Mammary epithelial cell (primary cell): ENCODE measurements at regions of chr11 and their contacts with region 1.

Region 1: DNA sequence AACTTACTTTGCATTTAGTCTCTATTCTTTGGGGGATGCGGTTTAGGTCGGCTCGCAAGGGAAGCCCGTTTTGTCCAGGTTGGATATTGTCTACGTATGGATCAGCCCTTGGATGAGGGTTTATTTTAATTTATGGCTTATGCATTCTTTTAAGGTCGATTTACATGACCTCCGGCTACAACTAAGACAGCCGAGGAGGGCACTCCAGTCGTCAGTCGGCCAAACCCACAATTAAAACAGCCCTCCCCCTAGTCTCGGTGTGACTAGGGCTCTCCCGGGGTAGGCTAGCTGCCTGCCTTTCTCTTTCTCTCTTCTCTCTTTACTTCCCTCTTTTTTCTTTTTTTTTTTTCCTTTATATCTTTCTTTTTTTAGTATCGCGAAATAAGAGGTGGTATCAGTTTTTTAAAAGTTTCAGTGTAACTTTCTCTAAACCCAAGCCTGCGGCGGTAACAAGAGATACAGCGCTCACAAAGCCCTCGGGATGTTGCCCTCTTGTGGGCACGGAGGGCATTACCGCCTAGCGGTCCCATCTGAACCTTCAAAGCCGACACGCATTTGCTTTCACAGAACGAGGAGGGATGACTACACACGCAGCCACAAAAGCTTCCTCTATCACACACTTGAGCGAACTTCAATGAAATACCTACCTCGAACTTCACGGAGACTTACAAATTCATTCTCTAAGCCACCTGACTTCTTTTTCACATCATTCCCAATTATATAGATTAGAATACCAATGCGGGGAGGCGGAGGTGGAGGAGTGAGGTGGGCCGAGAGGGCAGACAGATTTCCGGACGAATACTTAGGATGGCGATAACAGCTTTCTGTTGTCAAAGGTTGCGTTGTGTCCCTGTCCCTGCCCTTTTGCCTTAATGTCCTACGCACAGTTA is 132.3 kb upstream of the C11orf58 start:
- DNase-seq: peak; percentile 92
- H3K4me3 ChIP-seq: peak overlapping the region; percentile 64 to 75 (median 65)
- H3K27ac ChIP-seq: no peak overlapping the region
- H3K4me1 ChIP-seq: peaks cover 33% of the 10 kb centered on the region
- H3K27me3 ChIP-seq: peaks cover 32% of the 10 kb centered on the region
- CTCF ChIP-seq: peak; percentile 90 to 93

Region 2: GRCh38 chr11:15826826-15827225 is 779.3 kb before region 1 on chr11:
- CTCF ChIA-PET with region 1: interaction called, 4 read pairs
- dilution Hi-C with region 1: no loop called
- in situ Hi-C with region 1: loop called in 1 of 2 experiments (anchors 25 kb)
- intact Hi-C with region 1: no loop called
- DNase-seq: peak; percentile 15
- H3K4me3 ChIP-seq: no peak overlapping the region
- H3K27ac ChIP-seq: no peak overlapping the region
- H3K4me1 ChIP-seq: no peaks in the 10 kb centered on the region
- H3K27me3 ChIP-seq: no peaks in the 10 kb centered on the region
- CTCF ChIP-seq: peak; percentile 52 to 64

Region 3: GRCh38 chr11:16097543-16097942 is 508.6 kb before region 1 on chr11:
- CTCF ChIA-PET with region 1: interaction called, 7 read pairs
- dilution Hi-C with region 1: no loop called
- in situ Hi-C with region 1: no loop called
- intact Hi-C with region 1: loop called (anchors 1 kb)
- DNase-seq: peak; percentile 90
- H3K4me3 ChIP-seq: peak overlapping the region in 1 of 3 experiments; percentile 16
- H3K27ac ChIP-seq: peak overlapping the region; percentile 51
- H3K4me1 ChIP-seq: peaks cover 35% of the 10 kb centered on the region
- H3K27me3 ChIP-seq: no peaks in the 10 kb centered on the region
- CTCF ChIP-seq: no peak

Region 4: DNA sequence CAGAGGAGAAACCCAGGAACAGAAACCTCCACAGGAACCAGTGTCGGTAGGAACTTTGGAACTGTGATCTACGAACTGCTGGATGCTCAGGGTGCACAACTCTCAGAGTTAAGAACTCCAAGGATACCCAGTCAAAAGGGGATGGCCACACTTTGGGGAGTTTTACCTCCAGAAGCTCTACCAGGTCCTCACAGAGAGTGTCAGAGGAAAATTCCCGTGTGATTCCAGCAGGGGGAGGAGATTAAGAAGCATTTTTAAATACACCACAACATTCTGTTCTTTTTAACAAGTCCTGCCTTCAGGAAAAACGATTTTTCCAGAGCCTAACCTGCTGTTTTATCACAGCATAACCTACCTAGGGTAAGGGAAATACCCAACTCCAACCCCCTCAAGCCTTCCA is 353.8 kb before region 1 on chr11:
- CTCF ChIA-PET with region 1: no interaction called
- dilution Hi-C with region 1: no loop called
- in situ Hi-C with region 1: no loop called
- intact Hi-C with region 1: loop called (anchors 5 kb)
- DNase-seq: no peak
- H3K4me3 ChIP-seq: no peak overlapping the region
- H3K27ac ChIP-seq: no peak overlapping the region
- H3K4me1 ChIP-seq: no peaks in the 10 kb centered on the region
- H3K27me3 ChIP-seq: no peaks in the 10 kb centered on the region
- CTCF ChIP-seq: peak; percentile 22 to 38

Region 5: GRCh38 chr11:16356057-16356760 is 249.9 kb before region 1 on chr11 and contains the start of gene SOX6:
- CTCF ChIA-PET with region 1: no interaction called
- dilution Hi-C with region 1: no loop called
- in situ Hi-C with region 1: no loop called
- intact Hi-C with region 1: loop called (anchors 5 kb)
- DNase-seq: peak; percentile 29
- H3K4me3 ChIP-seq: no peak within 1 kb of the TSS
- H3K27ac ChIP-seq: no peak within 1 kb of the TSS
- H3K4me1 ChIP-seq: no peaks in the 10 kb centered on the region
- H3K27me3 ChIP-seq: peaks cover 7% of the 10 kb centered on the region
- CTCF ChIP-seq: no peak
- total RNA-seq, gene SOX6: 2.3 to 7.9 TPM

Region 6: GRCh38 chr11:16468735-16469453 is 137.2 kb before region 1 on chr11:
- CTCF ChIA-PET with region 1: no interaction called
- dilution Hi-C with region 1: no loop called
- in situ Hi-C with region 1: no loop called
- intact Hi-C with region 1: loop called (anchors 5 kb)
- DNase-seq: no peak
- H3K4me3 ChIP-seq: no peak overlapping the region
- H3K27ac ChIP-seq: no peak overlapping the region
- H3K4me1 ChIP-seq: no peaks in the 10 kb centered on the region
- H3K27me3 ChIP-seq: no peaks in the 10 kb centered on the region
- CTCF ChIP-seq: no peak

Region 7: GRCh38 chr11:16685914-16686313 is 79.8 kb after region 1 on chr11:
- CTCF ChIA-PET with region 1: no interaction called
- dilution Hi-C with region 1: no loop called
- in situ Hi-C with region 1: no loop called
- intact Hi-C with region 1: no loop called
- DNase-seq: no peak
- H3K4me3 ChIP-seq: no peak overlapping the region
- H3K27ac ChIP-seq: no peak overlapping the region
- H3K4me1 ChIP-seq: no peaks in the 10 kb centered on the region
- H3K27me3 ChIP-seq: peaks cover 2% of the 10 kb centered on the region
- CTCF ChIP-seq: no peak

Region 8: GRCh38 chr11:16902781-16903378 is 296.7 kb after region 1 on chr11:
- CTCF ChIA-PET with region 1: no interaction called
- dilution Hi-C with region 1: no loop called
- in situ Hi-C with region 1: no loop called
- intact Hi-C with region 1: no loop called
- DNase-seq: peak; percentile 35
- H3K4me3 ChIP-seq: no peak overlapping the region
- H3K27ac ChIP-seq: peak overlapping the region; percentile 92
- H3K4me1 ChIP-seq: peaks cover 41% of the 10 kb centered on the region
- H3K27me3 ChIP-seq: no peaks in the 10 kb centered on the region
- CTCF ChIP-seq: no peak